CD8-positive, alpha-beta T cell (primary cell): ENCODE measurements at regions of chr15 and their contacts with region 1.

Region 1: DNA sequence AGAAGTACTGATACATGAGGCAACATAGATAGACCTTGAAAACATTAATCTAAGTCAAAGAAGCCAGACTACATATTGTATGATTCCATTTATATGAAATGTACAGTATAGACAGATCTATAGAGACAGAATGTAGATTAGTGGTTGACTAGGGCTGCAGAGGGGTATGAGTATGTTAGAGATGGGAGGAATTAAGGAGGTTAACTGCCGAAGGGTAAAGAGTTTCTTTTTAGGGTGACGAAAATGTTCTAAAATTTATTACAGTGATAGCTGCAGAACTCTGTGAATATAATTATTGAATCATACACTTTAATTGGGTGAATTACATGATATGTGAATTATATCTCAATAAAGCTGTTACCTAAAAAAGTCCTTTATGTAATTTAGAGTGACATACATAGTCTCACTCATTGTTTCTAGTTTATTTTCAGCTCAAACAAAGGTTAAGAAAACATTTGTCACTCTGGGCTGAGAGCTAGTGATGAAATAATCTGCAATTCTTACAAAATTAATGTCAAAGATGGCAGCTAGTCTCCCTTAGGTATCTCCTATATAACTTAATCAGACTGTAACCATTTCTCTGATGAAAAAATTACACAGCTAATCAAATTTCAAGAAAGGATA is 61.4 kb downstream of the DENND4A start:
- DNase-seq: no peak
- ATAC-seq: no peak
- H3K4me3 ChIP-seq: no peak overlapping the region
- H3K4me3 Mint-ChIP-seq: no peak overlapping the region
- H3K27ac ChIP-seq: no peak overlapping the region
- H3K27ac Mint-ChIP-seq: no peak overlapping the region
- H3K4me1 ChIP-seq: no peaks in the 10 kb centered on the region
- H3K4me1 Mint-ChIP-seq: peaks cover 7% of the 10 kb centered on the region
- H3K27me3 ChIP-seq: no peaks in the 10 kb centered on the region
- H3K27me3 Mint-ChIP-seq: no peaks in the 10 kb centered on the region
- CTCF ChIP-seq: no peak

Region 2: GRCh38 chr15:65757256-65757655 is 26.6 kb after region 1 on chr15:
- CTCF ChIA-PET with region 1: no interaction called
- POLR2A ChIA-PET with region 1: no interaction called
- intact Hi-C with region 1: no loop called
- DNase-seq: no peak
- ATAC-seq: no peak
- H3K4me3 ChIP-seq: no peak overlapping the region
- H3K4me3 Mint-ChIP-seq: no peak overlapping the region
- H3K27ac ChIP-seq: no peak overlapping the region
- H3K27ac Mint-ChIP-seq: no peak overlapping the region
- H3K4me1 ChIP-seq: peaks cover 5% of the 10 kb centered on the region
- H3K4me1 Mint-ChIP-seq: peaks cover 33% of the 10 kb centered on the region
- H3K27me3 ChIP-seq: no peaks in the 10 kb centered on the region
- H3K27me3 Mint-ChIP-seq: no peaks in the 10 kb centered on the region
- CTCF ChIP-seq: no peak

Region 3: GRCh38 chr15:65783872-65784271 is 53.2 kb after region 1 on chr15:
- CTCF ChIA-PET with region 1: no interaction called
- POLR2A ChIA-PET with region 1: no interaction called
- intact Hi-C with region 1: loop called in 1 of 2 experiments (anchors 10 kb)
- DNase-seq: no peak
- ATAC-seq: no peak
- H3K4me3 ChIP-seq: no peak overlapping the region
- H3K4me3 Mint-ChIP-seq: no peak overlapping the region
- H3K27ac ChIP-seq: no peak overlapping the region
- H3K27ac Mint-ChIP-seq: no peak overlapping the region
- H3K4me1 ChIP-seq: peaks cover 23% of the 10 kb centered on the region
- H3K4me1 Mint-ChIP-seq: peaks cover 38% of the 10 kb centered on the region
- H3K27me3 ChIP-seq: no peaks in the 10 kb centered on the region
- H3K27me3 Mint-ChIP-seq: no peaks in the 10 kb centered on the region
- CTCF ChIP-seq: no peak